ENCODE measurements at regions of chr5 and their contacts with region 1.

Region 1: GRCh38 chr5:38765399-38765861 is 80.4 kb upstream of the OSMR start:
- DNase-seq: peak; percentile 66
- H3K4me3 ChIP-seq: no peak overlapping the region
- H3K27ac ChIP-seq: no peak overlapping the region
- H3K27me3 ChIP-seq: peaks cover 2% of the 10 kb centered on the region
- CTCF ChIP-seq: no peak

Region 2: DNA sequence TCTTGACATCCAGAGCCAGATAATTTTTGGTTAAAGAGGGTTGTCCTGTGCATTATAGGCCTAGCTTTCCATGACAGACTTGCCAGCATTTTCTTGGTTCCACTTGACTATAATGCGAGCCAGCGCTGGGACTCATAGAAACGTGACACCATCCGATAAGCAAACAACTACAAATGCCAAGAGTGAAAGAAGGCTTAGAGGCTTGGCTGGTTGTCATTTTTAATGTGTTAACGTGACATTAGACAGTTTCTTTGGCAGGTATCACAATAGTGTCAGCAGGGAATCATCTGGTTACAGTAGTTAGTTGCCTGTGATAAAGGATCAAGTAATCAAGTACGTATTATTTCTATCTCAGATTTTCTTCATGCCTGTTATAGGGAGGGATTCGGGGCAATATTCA is 189.0 kb before region 1 on chr5:
- CTCF ChIA-PET with region 1: no interaction called
- POLR2A ChIA-PET with region 1: no interaction called
- DNase-seq: no peak
- H3K4me3 ChIP-seq: no peak overlapping the region
- H3K27ac ChIP-seq: no peak overlapping the region
- H3K27me3 ChIP-seq: peaks cover 24% of the 10 kb centered on the region
- CTCF ChIP-seq: no peak

Region 3: GRCh38 chr5:38607396-38607795 is 158.0 kb before region 1 on chr5:
- CTCF ChIA-PET with region 1: interaction called, 7 read pairs
- POLR2A ChIA-PET with region 1: interaction called, 17 read pairs
- DNase-seq: peak; percentile 91
- H3K4me3 ChIP-seq: no peak overlapping the region
- H3K27ac ChIP-seq: peak overlapping the region; percentile 66
- H3K27me3 ChIP-seq: no peaks in the 10 kb centered on the region
- CTCF ChIP-seq: no peak

Region 4: DNA sequence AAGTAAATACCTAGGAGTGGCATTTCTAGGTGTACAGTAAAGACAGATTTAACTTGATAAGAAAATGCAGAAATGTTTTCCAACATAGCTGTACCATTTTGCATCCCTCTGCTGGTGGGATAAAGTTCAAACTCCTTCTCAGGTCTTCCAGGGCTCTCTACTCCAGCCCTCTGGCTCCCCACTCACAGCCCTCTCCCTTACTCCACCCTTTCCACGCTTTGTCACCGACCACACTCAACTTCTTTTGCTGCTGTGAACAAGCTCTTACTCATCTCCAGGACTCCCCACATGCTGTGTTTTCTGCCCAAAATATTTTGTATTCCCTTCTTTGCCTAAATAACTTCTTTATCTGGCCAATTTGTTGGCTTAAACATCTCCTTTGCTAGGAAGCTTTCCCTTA is 10.3 kb before region 1 on chr5:
- CTCF ChIA-PET with region 1: interaction called, 13 read pairs
- POLR2A ChIA-PET with region 1: interaction called, 8 read pairs
- DNase-seq: peak; percentile 26
- H3K4me3 ChIP-seq: no peak overlapping the region
- H3K27ac ChIP-seq: no peak overlapping the region
- H3K27me3 ChIP-seq: no peaks in the 10 kb centered on the region
- CTCF ChIP-seq: peak; percentile 27; the same call in 1 of the 2 replicates

Region 5: GRCh38 chr5:38783011-38783561 is 17.7 kb after region 1 on chr5:
- CTCF ChIA-PET with region 1: interaction called, 9 read pairs
- POLR2A ChIA-PET with region 1: interaction called, 28 read pairs
- DNase-seq: peak; percentile 83
- H3K4me3 ChIP-seq: no peak overlapping the region
- H3K27ac ChIP-seq: peak overlapping the region; percentile 77
- H3K27me3 ChIP-seq: no peaks in the 10 kb centered on the region
- CTCF ChIP-seq: peak; percentile 37